HepG2 (cell line): ENCODE measurements at regions of chr6 and their contacts with region 1.

Region 1: GRCh38 chr6:106787327-106788196 is 158.2 kb downstream of the QRSL1 start:
- DNase-seq: peak; percentile 92
- ATAC-seq: peak; percentile 88
- H3K4me3 ChIP-seq: peak overlapping the region; percentile 46 to 63 (median 50); a peak in 5 of 6 replicates
- H3K27ac ChIP-seq: peak overlapping the region; percentile 55
- H3K4me1 ChIP-seq: peaks cover 98% of the 10 kb centered on the region
- H3K27me3 ChIP-seq: no peaks in the 10 kb centered on the region
- CTCF ChIP-seq: no peak
- EP300 ChIP-seq: peak in 1 of 2 experiments; percentile 47; a peak in 1 of 4 replicates
- POLR2A ChIP-seq: no peak
- RAD21 ChIP-seq: no peak

Region 2: DNA sequence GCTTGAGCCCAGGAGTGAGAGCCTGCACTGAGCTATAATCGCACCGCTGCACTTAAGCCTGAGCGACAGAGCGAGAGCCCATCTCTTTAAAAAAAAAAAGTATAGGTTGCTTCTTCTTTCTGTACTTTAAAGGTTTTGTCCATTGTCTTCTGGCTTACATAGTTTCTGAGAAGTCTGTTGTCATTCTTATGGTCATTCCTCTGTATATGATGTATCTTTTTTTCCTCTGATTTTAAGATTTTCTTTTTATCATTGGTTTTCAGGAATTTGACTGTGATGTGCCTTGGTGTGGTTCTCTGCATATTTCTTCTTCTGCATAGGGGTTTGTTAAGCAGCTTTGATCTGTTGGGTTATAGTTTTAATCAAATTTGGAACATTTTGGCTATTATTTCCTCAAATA is 129.1 kb before region 1 on chr6:
- CTCF ChIA-PET with region 1: no interaction called
- POLR2A ChIA-PET with region 1: no interaction called
- in situ Hi-C with region 1: no loop called
- intact Hi-C with region 1: no loop called
- DNase-seq: no peak
- ATAC-seq: no peak
- H3K4me3 ChIP-seq: no peak overlapping the region
- H3K27ac ChIP-seq: no peak overlapping the region
- H3K4me1 ChIP-seq: no peaks in the 10 kb centered on the region
- H3K27me3 ChIP-seq: no peaks in the 10 kb centered on the region
- CTCF ChIP-seq: no peak
- EP300 ChIP-seq: no peak
- POLR2A ChIP-seq: no peak
- RAD21 ChIP-seq: no peak

Region 3: GRCh38 chr6:106731144-106731842 is 56.3 kb before region 1 on chr6:
- CTCF ChIA-PET with region 1: no interaction called
- POLR2A ChIA-PET with region 1: no interaction called
- in situ Hi-C with region 1: no loop called
- intact Hi-C with region 1: loop called (anchors 1 kb)
- DNase-seq: peak; percentile 86
- ATAC-seq: peak; percentile 95
- H3K4me3 ChIP-seq: peak overlapping the region in 1 of 3 experiments; percentile 39; a peak in 2 of 6 replicates
- H3K27ac ChIP-seq: peak overlapping the region; percentile 92
- H3K4me1 ChIP-seq: peaks cover 75% of the 10 kb centered on the region
- H3K27me3 ChIP-seq: no peaks in the 10 kb centered on the region
- CTCF ChIP-seq: 0 out of 2 replicates have a peak, but pooled peaks have one; percentile 6
- EP300 ChIP-seq: peak in 1 of 2 experiments; percentile 62; a peak in 2 of 4 replicates
- POLR2A ChIP-seq: 0 out of 4 replicates have a peak, but pooled peaks of 1 of the 2 experiments have one; percentile 35
- RAD21 ChIP-seq: peak; percentile 43; the same call in 1 of the 2 replicates

Region 4: DNA sequence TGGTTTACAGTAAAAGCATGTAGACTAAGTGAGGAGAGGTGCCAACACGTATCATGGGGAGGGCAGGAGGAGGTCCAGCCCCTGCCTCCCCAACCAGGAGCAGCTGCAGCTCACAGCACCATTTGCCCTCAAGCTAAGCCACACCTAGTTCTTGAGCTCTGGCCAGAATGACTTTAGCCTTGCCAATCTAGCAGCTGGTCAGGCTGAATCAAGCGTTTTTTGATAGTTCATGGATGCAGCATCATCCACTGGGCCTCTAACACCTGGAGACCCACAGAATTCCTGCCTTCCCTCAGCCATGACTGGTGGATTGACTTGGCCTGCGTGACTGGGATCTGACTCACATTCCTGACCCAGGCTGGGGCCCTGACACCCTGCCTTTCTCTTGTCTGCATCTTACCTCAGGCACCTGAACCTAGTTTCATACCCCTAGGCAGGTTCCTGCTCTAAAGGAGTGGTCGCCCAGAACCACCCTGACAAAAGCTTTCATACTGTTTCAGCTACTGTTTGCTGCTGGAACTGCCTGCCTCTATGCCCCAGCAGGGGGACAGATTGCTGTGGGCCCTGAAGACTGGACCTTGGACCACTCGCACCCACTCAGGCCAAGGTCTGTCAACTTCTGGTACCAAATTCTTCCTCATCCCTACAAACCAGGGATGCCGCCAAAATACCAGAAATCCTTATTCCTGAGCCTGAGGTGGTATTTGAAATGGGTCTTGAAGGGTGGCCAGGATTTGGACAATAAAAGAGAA is 35.9 kb before region 1 on chr6:
- CTCF ChIA-PET with region 1: no interaction called
- POLR2A ChIA-PET with region 1: no interaction called
- in situ Hi-C with region 1: no loop called
- intact Hi-C with region 1: loop called (anchors 5 kb)
- DNase-seq: no peak
- ATAC-seq: peak; percentile 61
- H3K4me3 ChIP-seq: no peak overlapping the region
- H3K27ac ChIP-seq: no peak overlapping the region
- H3K4me1 ChIP-seq: peaks cover 64% of the 10 kb centered on the region
- H3K27me3 ChIP-seq: no peaks in the 10 kb centered on the region
- CTCF ChIP-seq: no peak
- EP300 ChIP-seq: no peak
- POLR2A ChIP-seq: no peak
- RAD21 ChIP-seq: no peak